Testis (tissue), 5 donors: ENCODE measurements at regions of chr17 and their contacts with region 1.

Region 1: DNA sequence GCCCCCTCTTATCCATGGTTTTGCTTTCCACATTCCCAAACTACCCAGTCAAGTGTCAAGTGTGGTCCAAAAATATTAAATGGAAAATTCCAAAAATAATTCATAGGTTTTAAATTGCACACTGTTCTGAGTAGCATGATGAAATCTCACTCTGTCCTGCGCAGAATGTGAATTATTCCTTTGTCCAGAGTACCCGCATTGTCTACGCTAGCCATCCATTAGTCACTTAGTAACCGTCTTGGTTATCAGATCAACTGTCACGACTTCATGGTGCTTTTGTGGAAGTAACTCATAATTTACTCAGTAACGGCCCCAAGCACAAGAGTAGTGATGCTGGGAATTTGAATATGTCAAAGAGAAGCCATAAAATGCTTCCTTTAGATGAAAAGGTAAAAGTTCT is 94.9 kb downstream of the SLC39A11 start:
- DNase-seq: no peak
- H3K4me3 ChIP-seq: no peak overlapping the region
- H3K27ac ChIP-seq: no peak overlapping the region
- H3K4me1 ChIP-seq: no peaks in the 10 kb centered on the region
- H3K27me3 ChIP-seq: no peaks in the 10 kb centered on the region
- CTCF ChIP-seq: no peak
- POLR2A ChIP-seq: no peak

Region 2: DNA sequence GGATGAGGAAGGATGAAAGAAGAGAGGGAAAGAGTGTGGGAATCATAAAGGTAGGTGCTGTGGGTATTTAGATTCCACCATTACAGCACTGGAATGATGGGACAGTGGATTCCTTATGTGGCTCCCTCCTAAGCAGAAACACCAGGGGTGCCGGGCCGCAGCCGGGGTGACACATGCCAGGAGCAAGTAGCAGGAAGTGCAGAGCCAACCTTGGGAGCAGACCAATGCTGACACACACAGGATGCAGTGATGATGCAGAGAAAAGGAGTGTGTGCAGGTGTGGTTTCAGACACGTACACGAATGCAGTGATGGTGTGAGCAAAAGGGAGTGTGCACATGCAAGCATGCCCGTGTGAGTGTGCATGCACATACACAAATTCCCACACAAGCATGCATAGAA is 243.0 kb before region 1 on chr17:
- intact Hi-C with region 1: no loop called
- DNase-seq: no peak
- H3K4me3 ChIP-seq: no peak overlapping the region
- H3K27ac ChIP-seq: no peak overlapping the region
- H3K4me1 ChIP-seq: no peaks in the 10 kb centered on the region
- H3K27me3 ChIP-seq: no peaks in the 10 kb centered on the region
- CTCF ChIP-seq: no peak
- POLR2A ChIP-seq: no peak

Region 3: GRCh38 chr17:73166731-73167581 is 169.4 kb after region 1 on chr17:
- intact Hi-C with region 1: loop called (anchors 10 kb)
- DNase-seq: no peak
- H3K4me3 ChIP-seq: no peak overlapping the region
- H3K27ac ChIP-seq: no peak overlapping the region
- H3K4me1 ChIP-seq: peaks cover 7% of the 10 kb centered on the region
- H3K27me3 ChIP-seq: no peaks in the 10 kb centered on the region
- CTCF ChIP-seq: no peak
- POLR2A ChIP-seq: no peak